CD14-positive monocyte (primary cell): ENCODE measurements at regions of chr17 and their contacts with region 1.

Region 1: GRCh38 chr17:45277216-45277849 is 15.4 kb upstream of the SPATA32 start:
- DNase-seq: peak; percentile 87 to 94 (median 91)
- H3K4me3 ChIP-seq: no peak overlapping the region
- H3K4me3 Mint-ChIP-seq: no peak overlapping the region
- H3K27ac ChIP-seq: no peak overlapping the region
- H3K27ac Mint-ChIP-seq: peak overlapping the region in 2 of 7 donors; percentile 6 to 32
- H3K4me1 ChIP-seq: peaks cover 3 to 5% of the 10 kb centered on the region in 2 donors
- H3K4me1 Mint-ChIP-seq: peaks cover 9% of the 10 kb centered on the region
- H3K27me3 ChIP-seq: no peaks in the 10 kb centered on the region
- H3K27me3 Mint-ChIP-seq: peaks cover 0 to 2% (median 0%) of the 10 kb centered on the region in 3 donors
- CTCF ChIP-seq: peak; percentile 79

Region 2: DNA sequence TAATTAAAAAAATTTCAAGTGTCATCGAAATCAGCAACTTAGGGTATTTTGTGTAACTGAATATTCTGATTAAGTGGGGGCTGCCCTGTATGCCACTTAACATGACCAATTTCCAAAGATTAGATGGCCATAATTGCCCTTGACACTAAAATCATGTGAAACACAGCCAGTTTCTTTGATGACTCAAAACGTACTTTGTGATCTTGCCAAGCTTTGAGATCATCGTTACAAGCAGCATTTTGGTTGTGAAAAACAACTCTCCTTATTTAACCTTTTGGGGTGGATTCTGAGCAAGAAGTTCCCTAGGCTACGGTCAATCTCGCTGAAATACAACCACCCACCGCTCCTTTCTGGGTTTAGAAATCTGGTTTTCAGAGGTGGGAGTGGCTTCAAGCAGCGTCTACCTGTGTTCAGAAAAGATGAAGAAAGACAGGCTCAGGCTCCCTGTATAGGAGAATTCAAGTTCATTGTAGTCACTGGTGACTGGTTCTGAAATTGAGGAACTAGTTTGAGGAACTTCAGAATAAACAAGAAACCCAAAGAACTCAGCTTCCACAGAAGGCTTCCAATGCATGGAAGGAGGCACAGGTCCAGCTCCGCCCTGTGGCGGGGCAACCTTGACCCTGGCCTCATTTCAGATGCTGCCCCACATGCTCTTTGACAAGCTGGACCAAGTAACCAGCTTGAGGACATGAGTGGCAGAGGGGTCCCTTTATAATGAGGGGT is 30.1 kb after region 1 on chr17:
- intact Hi-C with region 1: loop called in 1 of 2 experiments (anchors 5 kb)
- DNase-seq: peak; percentile 81 to 93 (median 91)
- H3K4me3 ChIP-seq: peak overlapping the region in 1 of 3 experiments; percentile 30
- H3K4me3 Mint-ChIP-seq: peak overlapping the region; percentile 24 to 46
- H3K27ac ChIP-seq: peak overlapping the region; percentile 77 to 93
- H3K27ac Mint-ChIP-seq: peak overlapping the region; percentile 96 to 100 (median 99)
- H3K4me1 ChIP-seq: peaks cover 85 to 96% of the 10 kb centered on the region in 2 donors
- H3K4me1 Mint-ChIP-seq: peaks cover 81% of the 10 kb centered on the region
- H3K27me3 ChIP-seq: no peaks in the 10 kb centered on the region
- H3K27me3 Mint-ChIP-seq: no peaks in the 10 kb centered on the region
- CTCF ChIP-seq: no peak

Region 3: GRCh38 chr17:45385331-45385997 is 108.1 kb after region 1 on chr17:
- intact Hi-C with region 1: loop called (anchors 1 kb)
- DNase-seq: peak; percentile 77 to 85 (median 83)
- H3K4me3 ChIP-seq: no peak overlapping the region
- H3K4me3 Mint-ChIP-seq: peak overlapping the region in 1 of 2 donors; percentile 35
- H3K27ac ChIP-seq: no peak overlapping the region
- H3K27ac Mint-ChIP-seq: peak overlapping the region in 1 of 7 donors; percentile 19
- H3K4me1 ChIP-seq: peaks cover 17 to 19% of the 10 kb centered on the region in 2 donors
- H3K4me1 Mint-ChIP-seq: peaks cover 28% of the 10 kb centered on the region
- H3K27me3 ChIP-seq: no peaks in the 10 kb centered on the region
- H3K27me3 Mint-ChIP-seq: peaks cover 3 to 22% (median 7%) of the 10 kb centered on the region in 3 donors
- CTCF ChIP-seq: peak; percentile 98